Heart left ventricle (tissue), 16 donors: ENCODE measurements at regions of chr2 and their contacts with region 1.

Region 1: DNA sequence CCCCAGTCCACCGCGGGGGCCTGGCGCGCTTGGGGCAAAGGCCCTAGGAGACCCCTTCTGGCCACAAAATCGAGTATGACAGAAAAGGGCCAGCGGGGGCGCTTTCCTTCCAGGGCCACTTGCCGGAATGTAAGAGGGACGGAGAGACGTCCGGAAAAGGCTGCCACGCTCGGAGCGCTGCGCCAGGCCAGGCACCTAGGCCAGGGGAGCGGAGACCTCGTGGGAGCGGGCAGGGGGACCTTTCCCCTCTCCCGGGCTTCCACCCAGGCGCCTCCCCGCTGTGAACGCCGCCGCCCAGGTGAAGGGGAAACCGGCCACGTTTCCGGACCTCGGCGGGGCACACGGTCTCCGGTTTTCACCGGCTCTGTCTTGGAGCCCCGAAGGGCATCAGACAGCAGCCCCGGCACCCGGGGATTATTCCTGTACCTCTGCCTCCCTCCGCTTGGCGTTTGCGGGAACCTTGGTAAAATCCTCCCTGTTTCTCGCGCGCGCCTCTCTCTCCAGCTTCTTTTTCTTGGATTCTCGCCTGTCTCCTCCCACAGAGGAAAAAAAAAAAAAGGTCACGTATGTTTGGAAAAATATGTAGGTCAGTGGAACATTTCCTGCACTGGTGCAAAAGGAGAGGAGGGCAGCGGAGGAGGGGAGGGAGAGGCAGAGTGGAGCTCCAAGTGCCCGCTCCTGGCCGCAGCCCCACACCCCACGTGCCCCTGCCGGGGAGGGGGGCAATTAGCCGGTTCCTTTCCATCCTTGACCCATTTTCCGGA is 1.2 kb upstream of the NPAS2 start:
- DNase-seq: peak; percentile 49 to 88 (median 76)
- ATAC-seq: peak; percentile 63 to 84 (median 78)
- H3K4me3 ChIP-seq: peak overlapping the region; percentile 70 to 95 (median 79)
- H3K27ac ChIP-seq: peak overlapping the region; percentile 76 to 100 (median 92)
- H3K4me1 ChIP-seq: peaks cover 0 to 69% (median 29%) of the 10 kb centered on the region in 12 donors
- H3K27me3 ChIP-seq: peaks cover 0 to 33% (median 0%) of the 10 kb centered on the region in 9 donors
- CTCF ChIP-seq: peak in 7 of 12 donors; percentile 11 to 48 (median 29)
- POLR2A ChIP-seq: peak in 1 of 2 donors; percentile 47

Region 2: DNA sequence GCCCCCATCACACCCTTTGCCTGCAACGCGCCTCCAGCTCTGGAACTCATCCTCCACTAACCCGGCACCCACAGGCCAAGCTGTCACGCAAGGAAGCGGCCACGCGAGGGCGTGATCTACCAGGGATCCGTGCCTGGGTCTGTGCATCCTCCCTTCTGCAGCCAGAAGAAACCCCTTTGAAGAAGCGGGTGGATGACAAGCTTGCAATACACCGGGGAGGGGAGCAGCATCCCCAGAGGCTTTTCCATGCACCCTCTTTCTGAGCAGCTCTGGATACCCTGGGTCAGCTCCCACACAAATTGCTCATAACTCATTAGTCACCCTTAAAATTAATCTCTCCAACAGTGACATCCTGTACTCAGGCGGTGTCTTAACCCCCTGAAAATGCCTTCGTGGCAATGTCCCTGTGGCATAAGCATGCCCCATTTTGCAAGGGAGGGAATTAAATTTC is 208.4 kb before region 1 on chr2:
- intact Hi-C with region 1: loop called in 3 of 10 experiments (anchors 5 to 10 kb)
- DNase-seq: peak; percentile 55 to 83 (median 65)
- ATAC-seq: peak; percentile 28 to 85 (median 78)
- H3K4me3 ChIP-seq: no peak overlapping the region
- H3K27ac ChIP-seq: no peak overlapping the region
- H3K4me1 ChIP-seq: peaks cover 0 to 2% (median 0%) of the 10 kb centered on the region in 12 donors
- H3K27me3 ChIP-seq: no peaks in the 10 kb centered on the region
- CTCF ChIP-seq: peak; percentile 43 to 73 (median 56)
- POLR2A ChIP-seq: no peak

Region 3: GRCh38 chr2:100742277-100743254 is 76.2 kb before region 1 on chr2:
- intact Hi-C with region 1: loop called in 3 of 10 experiments (anchors 5 kb)
- DNase-seq: peak in 4 of 5 donors; percentile 32 to 55 (median 40)
- ATAC-seq: peak; percentile 80 to 89 (median 86)
- H3K4me3 ChIP-seq: no peak overlapping the region
- H3K27ac ChIP-seq: peak overlapping the region in 7 of 12 donors; percentile 6 to 69 (median 59)
- H3K4me1 ChIP-seq: peaks cover 0 to 22% (median 0%) of the 10 kb centered on the region in 12 donors
- H3K27me3 ChIP-seq: no peaks in the 10 kb centered on the region
- CTCF ChIP-seq: no peak
- POLR2A ChIP-seq: no peak

Region 4: DNA sequence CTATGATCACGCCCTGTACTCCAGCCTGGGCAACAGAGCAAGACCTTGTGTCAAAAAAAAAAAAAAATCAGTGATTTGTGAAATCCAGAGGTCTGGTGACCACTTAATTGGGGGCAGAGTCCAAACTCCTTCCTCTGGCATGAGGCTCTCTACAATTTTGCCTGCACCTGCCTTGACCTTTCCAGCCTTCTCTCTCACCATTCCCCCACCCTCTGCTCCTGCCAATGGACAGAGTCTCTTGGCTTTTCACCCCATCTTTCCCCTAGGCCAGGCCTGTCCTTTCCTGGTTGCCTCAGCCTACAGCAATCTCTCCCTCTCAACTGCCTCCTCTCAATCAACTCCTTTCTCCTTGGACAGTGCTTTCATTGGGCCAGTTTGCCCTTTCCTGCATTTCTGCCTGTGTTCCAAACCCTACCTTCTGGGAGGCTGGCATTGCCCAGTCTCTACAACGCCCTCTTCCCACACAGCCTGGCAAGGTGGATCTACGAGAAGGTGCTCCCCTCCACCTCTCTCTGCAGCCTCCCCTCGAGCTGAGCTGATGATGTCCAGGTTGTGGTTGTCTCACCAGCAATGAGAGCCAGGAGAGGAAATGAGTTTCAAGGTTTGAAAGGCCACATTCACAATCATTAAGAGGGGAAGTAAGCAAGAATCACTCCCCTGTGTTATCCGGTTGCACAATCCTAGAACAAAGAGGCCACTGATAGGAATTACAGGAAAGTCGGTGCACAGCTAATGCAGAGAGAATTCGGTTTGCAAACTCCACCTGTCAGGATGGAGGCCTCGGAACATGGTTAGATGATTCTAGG is 38.4 kb before region 1 on chr2:
- intact Hi-C with region 1: loop called in 1 of 10 experiments (anchors 5 kb)
- DNase-seq: peak in 1 of 5 donors; percentile 16
- ATAC-seq: peak; percentile 49 to 87 (median 86)
- H3K4me3 ChIP-seq: no peak overlapping the region
- H3K27ac ChIP-seq: peak overlapping the region in 6 of 12 donors; percentile 16 to 52 (median 41)
- H3K4me1 ChIP-seq: peaks cover 0 to 23% (median 9%) of the 10 kb centered on the region in 12 donors
- H3K27me3 ChIP-seq: no peaks in the 10 kb centered on the region
- CTCF ChIP-seq: no peak
- POLR2A ChIP-seq: no peak

Region 5: GRCh38 chr2:100882645-100883613 is 64.1 kb after region 1 on chr2:
- intact Hi-C with region 1: loop called in 3 of 10 experiments (anchors 5 to 10 kb)
- DNase-seq: no peak
- ATAC-seq: peak in 1 of 4 donors; percentile 13
- H3K4me3 ChIP-seq: no peak overlapping the region
- H3K27ac ChIP-seq: no peak overlapping the region
- H3K4me1 ChIP-seq: peaks cover 0 to 71% (median 28%) of the 10 kb centered on the region in 12 donors
- H3K27me3 ChIP-seq: no peaks in the 10 kb centered on the region
- CTCF ChIP-seq: no peak
- POLR2A ChIP-seq: no peak

Region 6: DNA sequence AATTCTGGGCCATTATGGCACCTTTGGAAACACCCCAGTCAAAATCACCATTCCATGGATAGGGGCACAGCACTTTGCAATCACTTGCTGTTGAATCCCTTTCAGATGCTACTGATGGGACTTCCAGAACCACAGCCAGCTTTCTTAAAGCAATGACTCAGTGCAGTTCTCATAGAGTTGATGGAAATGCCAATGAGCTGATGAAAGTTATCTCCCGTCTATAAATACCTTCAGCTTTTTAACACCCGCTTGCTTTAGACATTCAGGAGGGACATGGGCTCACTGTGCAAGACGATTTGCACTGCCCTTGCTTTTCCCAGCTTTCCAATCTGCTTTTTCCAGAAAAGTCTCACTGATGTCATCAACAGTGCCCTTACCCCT is 116.6 kb after region 1 on chr2:
- intact Hi-C with region 1: loop called in 2 of 10 experiments (anchors 5 kb)
- DNase-seq: no peak
- ATAC-seq: peak; percentile 71 to 87 (median 82)
- H3K4me3 ChIP-seq: no peak overlapping the region
- H3K27ac ChIP-seq: peak overlapping the region in 11 of 12 donors; percentile 11 to 89 (median 71)
- H3K4me1 ChIP-seq: peaks cover 0 to 41% (median 15%) of the 10 kb centered on the region in 12 donors
- H3K27me3 ChIP-seq: no peaks in the 10 kb centered on the region
- CTCF ChIP-seq: no peak
- POLR2A ChIP-seq: no peak

Region 7: GRCh38 chr2:100984892-100985379 is 166.1 kb after region 1 on chr2:
- intact Hi-C with region 1: loop called in 8 of 10 experiments (anchors 2 to 10 kb)
- DNase-seq: peak; percentile 76 to 88 (median 79)
- ATAC-seq: peak; percentile 65 to 75 (median 66)
- H3K4me3 ChIP-seq: no peak overlapping the region
- H3K27ac ChIP-seq: peak overlapping the region in 1 of 12 donors; percentile 22
- H3K4me1 ChIP-seq: peaks cover 0 to 12% (median 0%) of the 10 kb centered on the region in 12 donors
- H3K27me3 ChIP-seq: no peaks in the 10 kb centered on the region
- CTCF ChIP-seq: peak; percentile 82 to 97 (median 90)
- POLR2A ChIP-seq: no peak